ENCODE measurements at regions of chr15 and their contacts with region 1.

Region 1: DNA sequence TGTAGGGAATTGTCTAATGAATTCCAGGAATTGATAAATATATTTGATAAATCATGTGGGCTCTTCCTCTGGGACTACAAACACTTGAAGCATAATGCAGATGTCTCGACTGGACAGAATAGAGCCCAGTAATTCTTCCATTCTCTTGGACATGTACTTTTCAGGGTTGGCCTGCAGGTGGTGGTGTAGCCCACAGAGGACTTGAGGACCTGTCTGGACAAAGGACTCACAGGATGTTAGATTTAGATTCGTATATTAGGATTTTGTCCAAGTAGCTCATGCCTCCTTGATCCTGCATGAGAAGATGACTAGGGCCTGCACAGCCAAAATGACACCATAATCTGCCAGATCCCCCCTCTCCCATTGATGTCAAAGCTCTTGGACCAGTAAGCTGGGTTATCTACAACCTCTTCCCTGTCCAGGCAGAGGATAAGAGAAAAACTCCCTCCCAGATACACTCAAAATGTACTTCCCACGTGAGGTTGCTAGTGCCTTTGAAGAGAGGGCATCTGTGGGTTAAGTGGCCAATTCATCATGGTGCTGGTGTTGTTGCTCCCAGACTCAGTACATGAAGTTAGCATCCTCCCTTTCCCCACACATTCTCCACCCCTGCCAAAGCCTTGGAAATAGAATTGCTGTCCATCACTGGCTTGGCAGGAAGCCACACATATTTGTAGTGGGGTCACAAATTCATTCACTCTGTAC is 88.6 kb upstream of the ZNF280D start:
- DNase-seq: no peak

Region 2: GRCh38 chr15:56805466-56806146 is 16.3 kb before region 1 on chr15:
- intact Hi-C with region 1: no loop called
- DNase-seq: no peak

Region 3: GRCh38 chr15:56869573-56869972 is 47.7 kb after region 1 on chr15:
- intact Hi-C with region 1: loop called (anchors 5 kb)
- DNase-seq: no peak

Region 4: DNA sequence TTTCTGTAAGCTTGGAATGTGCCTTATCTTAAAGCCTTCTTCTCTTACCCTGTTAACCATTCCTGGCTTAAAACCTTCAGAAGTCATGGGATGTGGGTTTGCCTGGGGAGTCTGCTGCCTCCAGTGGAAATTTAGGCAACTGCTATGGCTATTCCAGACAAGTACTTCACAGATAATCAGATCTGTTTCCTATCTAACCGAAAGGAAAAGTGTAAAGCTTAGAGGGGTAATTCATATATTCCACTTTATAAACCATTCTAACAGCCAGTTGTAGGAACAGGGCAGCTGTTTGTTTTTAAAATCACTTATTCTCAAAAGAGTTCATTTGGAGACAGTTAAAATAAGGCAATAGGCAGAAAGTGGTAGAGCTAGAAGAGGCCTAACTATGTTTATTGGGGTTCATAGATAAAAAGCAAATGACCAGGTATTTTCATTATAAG is 316.5 kb after region 1 on chr15:
- intact Hi-C with region 1: loop called (anchors 10 kb)
- DNase-seq: no peak

Region 5: DNA sequence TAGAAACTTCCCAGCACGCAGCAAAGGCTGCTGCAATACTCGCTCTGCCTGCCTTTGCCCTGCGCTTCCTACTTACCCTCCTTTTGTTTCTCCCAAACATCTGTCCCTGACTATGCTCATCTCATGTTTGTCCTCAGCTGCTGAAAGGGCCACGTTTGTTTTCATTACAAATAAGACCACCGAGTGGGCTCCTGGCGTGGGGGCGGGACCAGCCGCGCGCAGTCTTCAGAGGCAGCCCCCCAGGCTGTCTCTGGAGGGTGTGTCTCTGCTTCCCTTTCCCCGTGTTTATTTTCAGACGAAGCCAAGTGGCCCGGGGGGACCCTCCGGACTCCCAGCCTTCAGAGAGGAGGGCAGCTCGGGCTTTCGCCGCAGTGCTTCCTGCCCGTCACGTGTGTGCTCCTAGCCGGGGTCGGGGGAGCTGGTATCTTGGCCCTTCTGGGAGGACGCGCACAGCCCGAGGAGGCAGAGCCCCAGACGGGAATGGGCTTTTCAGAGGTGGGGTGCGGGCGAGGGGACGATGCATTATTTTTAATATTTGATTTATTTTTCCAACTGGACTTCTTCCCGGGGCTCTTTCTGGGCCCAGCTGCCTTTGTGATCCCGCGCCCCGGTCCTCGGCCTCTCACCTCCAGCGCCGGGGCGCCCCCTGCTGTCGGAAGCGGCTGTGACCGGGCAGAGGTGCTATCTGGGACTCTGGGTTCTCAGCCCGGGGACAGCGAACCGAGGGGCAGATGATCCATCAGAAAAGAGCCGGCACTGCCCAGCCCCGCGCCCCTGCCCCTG is 484.5 kb after region 1 on chr15:
- intact Hi-C with region 1: loop called (anchors 5 kb)
- DNase-seq: peak; percentile 94